Breast epithelium (tissue), 4 donors: ENCODE measurements at regions of chr21 and their contacts with region 1.

Region 1: GRCh38 chr21:27793901-27794300 is 827.0 kb upstream of the ADAMTS5 start:
- DNase-seq: no peak
- H3K4me3 ChIP-seq: no peak overlapping the region
- H3K27ac ChIP-seq: no peak overlapping the region
- H3K4me1 ChIP-seq: no peaks in the 10 kb centered on the region
- H3K27me3 ChIP-seq: no peaks in the 10 kb centered on the region
- CTCF ChIP-seq: no peak
- POLR2A ChIP-seq: no peak

Region 2: DNA sequence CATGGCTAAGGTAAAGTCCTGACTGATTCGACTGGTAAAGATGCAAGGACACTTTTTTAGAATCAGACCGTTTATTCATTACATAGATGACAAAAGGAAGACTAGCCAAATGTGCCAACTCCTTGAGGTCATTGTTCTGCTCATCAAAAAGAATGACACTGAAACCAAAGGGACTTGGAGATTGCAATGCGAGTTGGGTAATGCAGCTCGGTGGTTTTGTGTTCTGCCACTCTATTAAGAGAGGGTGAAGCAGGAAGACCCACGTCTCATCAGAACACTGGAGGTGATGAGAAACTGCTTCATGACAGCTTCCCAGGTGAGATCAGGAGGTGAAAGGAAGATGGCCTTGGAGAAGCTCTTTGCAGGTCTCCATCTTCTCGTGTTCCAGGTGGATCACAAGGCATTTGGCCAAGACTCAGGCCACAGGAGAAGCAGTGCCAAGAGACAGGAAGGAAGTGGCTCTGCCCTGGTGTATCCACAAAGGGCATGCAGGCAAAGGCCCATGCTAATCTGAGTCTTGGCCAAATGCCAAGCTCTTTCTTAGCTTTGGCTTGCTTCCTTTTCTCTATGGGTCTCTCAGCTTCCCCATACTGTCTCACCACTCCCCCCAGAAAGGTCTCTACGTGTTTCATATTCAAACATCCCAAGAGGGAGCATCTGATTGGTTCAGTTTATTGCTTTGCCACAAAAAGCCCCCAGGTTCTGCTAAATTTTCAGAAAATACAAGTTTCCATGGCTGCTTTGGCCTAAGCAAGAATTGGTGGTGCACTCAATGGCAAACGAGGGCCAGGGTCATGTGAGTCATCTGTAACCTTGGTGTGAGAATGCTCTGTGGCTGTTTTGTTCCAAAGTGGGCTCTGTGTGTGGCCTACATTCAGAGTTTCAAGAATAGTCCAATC is 1285.2 kb after region 1 on chr21:
- intact Hi-C with region 1: loop called (anchors 5 kb)
- DNase-seq: no peak
- H3K4me3 ChIP-seq: no peak overlapping the region
- H3K27ac ChIP-seq: no peak overlapping the region
- H3K4me1 ChIP-seq: no peaks in the 10 kb centered on the region
- H3K27me3 ChIP-seq: no peaks in the 10 kb centered on the region
- CTCF ChIP-seq: no peak
- POLR2A ChIP-seq: no peak